Heart left ventricle (tissue), 16 donors: ENCODE measurements at regions of chr18 and their contacts with region 1.

Region 1: GRCh38 chr18:5841518-5841917 is 53.8 kb downstream of the TMEM200C start:
- DNase-seq: no peak
- ATAC-seq: no peak
- H3K4me3 ChIP-seq: no peak overlapping the region
- H3K27ac ChIP-seq: no peak overlapping the region
- H3K4me1 ChIP-seq: no peaks in the 10 kb centered on the region
- H3K27me3 ChIP-seq: peaks cover 0 to 13% (median 0%) of the 10 kb centered on the region in 9 donors
- CTCF ChIP-seq: peak in 5 of 12 donors; percentile 10 to 34 (median 19)
- POLR2A ChIP-seq: no peak

Region 2: DNA sequence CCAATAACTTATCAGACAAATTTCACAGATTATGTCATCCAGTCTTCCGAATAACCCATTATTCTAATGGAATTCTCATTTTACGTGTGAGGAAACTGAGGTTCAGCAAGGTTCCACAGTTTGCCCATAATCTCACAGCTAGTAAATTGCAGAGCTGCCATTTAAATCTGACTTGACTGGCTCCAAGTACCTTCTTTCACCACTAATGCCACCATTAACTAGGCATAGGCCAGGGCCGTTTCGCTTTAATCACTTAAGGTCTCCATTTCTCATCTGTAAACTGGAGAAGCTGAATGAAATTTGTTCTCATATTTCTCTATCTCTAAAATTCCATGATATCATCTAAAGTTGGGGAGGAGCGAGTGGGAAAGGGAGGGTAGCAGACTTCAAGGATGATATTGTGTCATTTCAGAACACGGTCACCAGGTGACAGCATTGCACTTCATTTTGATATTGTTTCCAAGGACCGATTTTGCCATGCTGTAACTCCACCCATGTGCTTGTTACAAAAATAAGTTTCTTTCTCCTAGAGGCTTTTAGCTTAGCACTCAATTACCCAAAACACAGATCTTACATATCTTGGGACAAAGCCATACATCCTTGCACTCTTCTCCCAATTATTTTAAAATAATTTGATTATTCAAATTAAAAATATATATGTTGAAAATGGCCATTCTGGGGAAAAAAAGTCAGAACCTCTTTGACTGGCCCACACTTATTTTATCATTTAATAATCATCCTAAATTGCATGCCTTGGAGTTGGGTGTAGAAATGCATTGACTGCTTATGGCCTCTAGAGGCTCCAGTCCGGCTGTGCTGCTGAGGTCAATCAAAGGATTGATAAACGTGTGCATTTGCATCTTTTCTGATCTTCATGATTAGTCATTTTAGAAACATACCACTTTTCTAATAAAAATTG is 768.2 kb before region 1 on chr18:
- intact Hi-C with region 1: loop called in 3 of 10 experiments (anchors 5 to 10 kb)
- DNase-seq: peak in 1 of 5 donors; percentile 9
- ATAC-seq: peak in 3 of 4 donors; percentile 56 to 83 (median 72)
- H3K4me3 ChIP-seq: no peak overlapping the region
- H3K27ac ChIP-seq: no peak overlapping the region
- H3K4me1 ChIP-seq: no peaks in the 10 kb centered on the region
- H3K27me3 ChIP-seq: peaks cover 0 to 3% (median 0%) of the 10 kb centered on the region in 9 donors
- CTCF ChIP-seq: peak in 11 of 12 donors; percentile 26 to 70 (median 51)
- POLR2A ChIP-seq: no peak